ENCODE measurements at regions of chr2 and their contacts with region 1.

Region 1: GRCh38 chr2:226984750-226985582 is 149.1 kb downstream of the RHBDD1 start:
- DNase-seq: peak; percentile 57
- CTCF ChIP-seq: peak; percentile 41

Region 2: DNA sequence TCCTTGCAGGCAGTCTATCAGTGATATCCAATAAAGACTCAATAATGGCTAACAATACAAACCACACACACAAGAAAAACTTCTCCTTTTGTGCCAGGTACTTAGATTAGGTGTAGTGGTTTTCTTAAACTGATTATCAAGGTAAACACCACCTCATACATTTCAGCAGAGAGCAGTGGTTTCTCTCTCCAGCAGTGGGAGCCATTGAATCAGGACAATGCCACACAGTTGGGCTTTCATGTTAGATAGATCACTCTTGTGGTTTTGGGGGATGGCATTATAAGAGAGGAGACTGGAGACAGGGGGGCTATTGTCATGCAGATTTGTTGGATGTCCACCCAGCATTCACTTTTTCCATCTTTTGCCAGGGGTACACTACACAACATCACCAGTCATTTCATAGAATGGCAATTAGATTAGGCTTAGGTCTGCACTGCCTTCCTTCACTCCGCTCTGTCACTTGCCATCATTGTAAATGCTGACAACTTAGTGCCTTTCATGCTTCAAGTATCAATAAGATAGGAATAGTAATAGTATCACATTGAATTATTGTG is 171.7 kb before region 1 on chr2:
- CTCF ChIA-PET with region 1: interaction called, 10 read pairs
- POLR2A ChIA-PET with region 1: no interaction called
- DNase-seq: no peak
- CTCF ChIP-seq: peak; percentile 53

Measured in GM10248 (cell line).